ENCODE measurements at regions of chr14 and their contacts with region 1.

Region 1: DNA sequence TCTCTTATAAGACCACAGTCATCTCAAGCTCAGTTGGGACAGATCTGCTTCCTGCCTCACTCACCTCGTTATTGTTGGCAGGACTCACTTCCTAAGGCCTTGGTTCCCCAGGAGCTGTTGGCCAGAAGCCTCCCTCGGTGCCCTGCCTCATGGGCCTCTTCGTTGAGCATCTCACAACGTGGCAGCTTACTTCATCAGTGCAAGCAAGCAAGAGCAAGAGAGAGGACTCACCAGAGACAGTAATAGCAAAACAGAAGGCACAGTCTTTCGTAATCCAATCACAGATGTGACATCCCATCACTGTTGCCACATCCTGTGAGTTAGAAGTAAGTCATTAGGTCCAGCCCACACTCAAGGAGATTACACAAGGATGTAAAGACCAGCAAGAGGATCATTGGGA is 5.1 kb upstream of the NUMB start:
- DNase-seq: peak in 1 of 5 donors; percentile 29
- H3K4me3 ChIP-seq: no peak overlapping the region
- H3K27ac ChIP-seq: no peak overlapping the region
- H3K4me1 ChIP-seq: peaks cover 13% of the 10 kb centered on the region
- H3K27me3 ChIP-seq: no peaks in the 10 kb centered on the region
- CTCF ChIP-seq: no peak
- EP300 ChIP-seq: no peak
- POLR2A ChIP-seq: no peak

Region 2: GRCh38 chr14:73188501-73188942 is 274.9 kb before region 1 on chr14:
- intact Hi-C with region 1: no loop called
- DNase-seq: peak in 1 of 5 donors; percentile 46
- H3K4me3 ChIP-seq: no peak overlapping the region
- H3K27ac ChIP-seq: no peak overlapping the region
- H3K4me1 ChIP-seq: no peaks in the 10 kb centered on the region
- H3K27me3 ChIP-seq: no peaks in the 10 kb centered on the region
- CTCF ChIP-seq: no peak
- EP300 ChIP-seq: no peak
- POLR2A ChIP-seq: no peak

Region 3: DNA sequence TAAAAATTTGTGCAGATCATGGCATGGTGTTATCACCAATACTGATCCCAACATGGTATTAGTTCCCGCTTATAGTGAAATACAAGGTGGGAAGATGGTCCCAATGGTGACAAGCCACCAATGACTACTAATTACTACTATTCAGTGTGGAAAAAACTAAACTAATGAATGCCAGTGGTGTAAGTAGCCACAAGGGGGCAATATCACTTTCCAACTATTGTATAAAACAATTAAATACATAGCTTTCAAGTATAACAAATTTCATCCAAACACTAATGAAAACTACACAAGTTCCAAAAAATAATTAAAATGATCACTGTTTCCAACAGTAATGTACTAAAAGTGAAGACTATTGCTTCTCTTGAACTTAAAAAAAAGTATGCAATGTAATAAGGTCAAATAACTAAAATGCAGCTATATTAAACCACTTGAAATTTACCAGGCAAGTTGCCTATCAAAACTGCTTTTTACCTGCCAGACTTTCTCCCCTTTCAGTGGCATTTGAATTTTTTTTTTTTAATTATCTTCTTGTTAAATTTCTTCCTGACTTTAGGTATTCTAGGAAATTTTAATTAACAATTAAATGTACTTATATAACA is 168.1 kb before region 1 on chr14:
- intact Hi-C with region 1: loop called (anchors 5 to 10 kb)
- DNase-seq: no peak
- H3K4me3 ChIP-seq: no peak overlapping the region
- H3K27ac ChIP-seq: no peak overlapping the region
- H3K4me1 ChIP-seq: no peaks in the 10 kb centered on the region
- H3K27me3 ChIP-seq: no peaks in the 10 kb centered on the region
- CTCF ChIP-seq: peak in 2 of 3 donors; percentile 63
- EP300 ChIP-seq: no peak
- POLR2A ChIP-seq: no peak